Activated CD4-positive, alpha-beta T cell treated with anti-CD3 and anti-CD28 coated beads for 36 hours (primary cell): ENCODE measurements at regions of chr2 and their contacts with region 1.

Region 1: DNA sequence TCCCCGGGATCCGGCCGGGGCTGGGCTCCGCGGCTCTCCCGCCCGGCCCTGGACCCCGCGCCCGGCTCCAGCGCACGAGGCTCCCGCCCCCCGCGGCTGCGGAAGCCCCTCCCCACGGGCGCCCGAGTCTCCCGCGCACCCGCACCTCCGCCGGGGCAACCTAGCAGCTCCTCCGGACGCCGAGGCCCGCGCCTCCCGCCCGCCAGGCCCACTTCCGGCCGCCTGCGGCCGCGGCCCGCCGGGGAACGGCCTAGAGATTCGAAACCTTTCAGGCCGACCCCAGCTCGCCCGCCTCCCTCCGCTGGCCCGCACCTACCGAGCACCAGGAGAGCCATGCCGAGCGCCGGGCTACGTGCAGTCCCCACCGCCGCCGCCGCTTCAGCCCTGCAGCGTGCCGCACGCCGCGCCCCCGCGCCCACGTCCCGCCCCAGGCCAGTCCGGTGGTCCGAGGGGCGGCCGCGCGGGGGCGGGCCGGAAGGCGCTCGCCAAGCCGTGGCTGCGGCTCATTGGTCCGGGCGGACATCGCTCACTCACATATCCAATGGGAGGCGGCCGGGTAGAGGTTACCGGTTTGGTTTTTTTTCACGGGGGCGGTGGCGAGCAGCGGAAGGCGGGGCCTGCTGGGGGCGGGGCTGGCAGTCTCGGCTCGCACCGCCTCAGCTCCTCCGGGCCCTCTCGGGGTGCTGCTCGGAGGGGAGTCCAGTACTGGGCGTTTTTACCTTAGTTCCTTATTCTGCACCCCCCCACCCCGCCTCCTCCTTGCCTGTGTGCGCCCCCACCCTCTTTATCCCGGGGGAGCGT is at the start of gene PDIA6:
- DNase-seq: peak; percentile 97
- ATAC-seq: peak; percentile 94
- H3K4me3 Mint-ChIP-seq: peak within 1 kb of the TSS; percentile 89
- H3K27ac Mint-ChIP-seq: peak within 1 kb of the TSS; percentile 90
- H3K4me1 Mint-ChIP-seq: peaks cover 34% of the 10 kb centered on the region
- H3K27me3 Mint-ChIP-seq: peaks cover 1% of the 10 kb centered on the region
- total RNA-seq, gene PDIA6: 123 to 157 TPM

Region 2: GRCh38 chr2:10331027-10331701 is 481.4 kb before region 1 on chr2:
- CTCF ChIA-PET with region 1: no interaction called
- POLR2A ChIA-PET with region 1: no interaction called
- intact Hi-C with region 1: loop called in 1 of 2 experiments (anchors 5 kb)
- DNase-seq: peak; percentile 93
- ATAC-seq: peak; percentile 58
- H3K4me3 Mint-ChIP-seq: peak overlapping the region; percentile 91
- H3K27ac Mint-ChIP-seq: peak overlapping the region; percentile 92
- H3K4me1 Mint-ChIP-seq: peaks cover 81% of the 10 kb centered on the region
- H3K27me3 Mint-ChIP-seq: no peaks in the 10 kb centered on the region

Region 3: GRCh38 chr2:10795508-10796046 is 17.0 kb before region 1 on chr2:
- CTCF ChIA-PET with region 1: interaction called, 8 read pairs
- POLR2A ChIA-PET with region 1: no interaction called
- intact Hi-C with region 1: loop called in 1 of 2 experiments (anchors 2 kb)
- DNase-seq: no peak
- ATAC-seq: peak; percentile 69
- H3K4me3 Mint-ChIP-seq: no peak overlapping the region
- H3K27ac Mint-ChIP-seq: no peak overlapping the region
- H3K4me1 Mint-ChIP-seq: peaks cover 41% of the 10 kb centered on the region
- H3K27me3 Mint-ChIP-seq: no peaks in the 10 kb centered on the region

Region 4: DNA sequence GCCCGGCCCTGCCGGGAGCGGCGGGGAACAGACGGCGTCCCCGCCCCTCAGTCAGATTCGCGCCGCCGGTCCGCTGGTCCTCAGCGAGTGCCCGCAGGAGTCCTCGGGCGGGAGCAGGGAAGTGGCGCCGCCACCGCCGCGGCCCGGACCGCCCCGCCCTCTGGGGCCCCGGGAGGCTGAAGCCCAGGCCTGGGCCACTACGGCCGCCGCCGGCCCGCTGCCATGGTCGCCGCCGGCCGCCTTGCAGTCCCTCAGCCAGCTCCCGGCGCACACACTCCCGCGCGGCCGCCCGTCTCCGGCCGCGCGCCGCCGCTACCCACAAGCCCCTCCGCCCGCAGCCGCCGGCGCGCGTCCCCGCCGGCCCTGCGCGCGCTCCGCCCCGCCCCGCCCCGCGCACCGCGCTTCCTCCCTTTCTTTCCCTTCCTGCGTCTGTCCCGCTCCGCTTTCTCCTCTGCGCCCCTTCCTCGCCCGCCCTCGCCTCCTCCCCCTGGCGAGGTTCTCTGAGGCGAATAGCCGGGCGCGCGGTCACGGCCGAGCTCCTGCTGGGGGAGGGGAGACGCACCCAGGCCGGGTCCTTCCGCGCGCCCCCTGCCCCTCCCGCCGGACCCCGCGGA is 531.9 kb after region 1 on chr2 and contains the start of gene ROCK2:
- CTCF ChIA-PET with region 1: no interaction called
- POLR2A ChIA-PET with region 1: no interaction called
- intact Hi-C with region 1: loop called in 1 of 2 experiments (anchors 2 kb)
- DNase-seq: peak; percentile 81
- ATAC-seq: peak; percentile 68
- H3K4me3 Mint-ChIP-seq: peak within 1 kb of the TSS; percentile 97
- H3K27ac Mint-ChIP-seq: peak within 1 kb of the TSS; percentile 89
- H3K4me1 Mint-ChIP-seq: peaks cover 31% of the 10 kb centered on the region
- H3K27me3 Mint-ChIP-seq: no peaks in the 10 kb centered on the region
- total RNA-seq, gene ROCK2: 14.4 to 16.7 TPM

Region 5: GRCh38 chr2:11743846-11744553 is 931.4 kb after region 1 on chr2:
- CTCF ChIA-PET with region 1: no interaction called
- POLR2A ChIA-PET with region 1: no interaction called
- intact Hi-C with region 1: loop called in 1 of 2 experiments (anchors 2 kb)
- DNase-seq: peak; percentile 90
- ATAC-seq: peak; percentile 83
- H3K4me3 Mint-ChIP-seq: peak overlapping the region; percentile 34
- H3K27ac Mint-ChIP-seq: peak overlapping the region; percentile 73
- H3K4me1 Mint-ChIP-seq: peaks cover 54% of the 10 kb centered on the region
- H3K27me3 Mint-ChIP-seq: no peaks in the 10 kb centered on the region